ENCODE measurements at regions of chr20 and their contacts with region 1.

Region 1: DNA sequence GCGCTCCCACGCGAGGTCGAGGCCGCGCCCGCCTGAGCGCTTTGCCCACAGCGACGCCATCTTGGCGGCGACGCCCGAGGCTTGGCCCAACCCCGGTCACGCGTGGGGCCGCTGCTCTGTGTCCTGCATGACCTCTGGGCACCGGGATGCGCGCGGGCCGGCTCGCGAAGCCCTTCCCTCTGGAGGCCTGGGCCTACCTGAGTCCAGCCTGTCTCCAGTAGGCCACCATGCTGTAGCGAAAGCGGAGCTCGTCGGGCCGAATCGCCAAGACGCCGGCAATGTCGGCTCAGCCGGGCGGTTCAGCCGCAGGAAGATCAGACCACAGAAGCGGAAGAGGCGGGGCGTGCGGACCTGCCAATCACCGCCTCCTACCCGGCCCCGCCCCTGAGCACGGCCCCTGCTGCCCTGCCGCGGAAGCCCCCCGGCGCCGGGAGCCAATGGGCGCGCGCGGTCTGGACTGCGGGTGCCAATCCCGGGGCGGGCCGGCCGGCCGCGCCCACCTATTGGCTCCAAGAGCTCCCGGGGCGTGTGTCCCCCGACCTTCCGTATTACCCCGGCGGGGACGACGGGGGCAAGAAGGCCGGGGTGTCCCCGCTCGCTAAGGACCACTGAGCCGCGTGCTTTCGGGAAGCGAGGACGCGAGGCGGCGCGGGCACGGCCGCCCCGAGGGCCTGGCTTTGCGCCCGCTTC is at the start of gene ATP5F1E:
- DNase-seq: peak; percentile 95 to 97 (median 97)
- ATAC-seq: peak; percentile 97
- H3K4me3 ChIP-seq: peak within 1 kb of the TSS; percentile 84
- H3K27ac ChIP-seq: peak within 1 kb of the TSS; percentile 96
- H3K4me1 ChIP-seq: peaks cover 13 to 18% of the 10 kb centered on the region in 2 experiments; a peak in 4 of 5 replicates
- H3K27me3 ChIP-seq: no peaks in the 10 kb centered on the region
- CTCF ChIP-seq: no peak
- EP300 ChIP-seq: no peak
- POLR2A ChIP-seq: peak; percentile 96
- RAD21 ChIP-seq: peak in 1 of 2 experiments; percentile 13; a peak in 1 of 4 replicates
- polyA plus RNA-seq, gene ATP5F1E: 161 to 162 TPM

Region 2: GRCh38 chr20:58890518-58891085 is 141.6 kb before region 1 on chr20:
- CTCF ChIA-PET with region 1: no interaction called
- POLR2A ChIA-PET with region 1: no interaction called
- in situ Hi-C with region 1: no loop called
- intact Hi-C with region 1: loop called (anchors 5 kb)
- DNase-seq: peak in 1 of 4 experiments; percentile 67
- ATAC-seq: peak; percentile 42
- H3K4me3 ChIP-seq: peak overlapping the region; percentile 92
- H3K27ac ChIP-seq: peak overlapping the region; percentile 71
- H3K4me1 ChIP-seq: peaks cover 13 to 20% of the 10 kb centered on the region in 2 experiments; a peak in 4 of 5 replicates
- H3K27me3 ChIP-seq: no peaks in the 10 kb centered on the region
- CTCF ChIP-seq: no peak
- EP300 ChIP-seq: no peak
- POLR2A ChIP-seq: 0 out of 2 replicates have a peak, but pooled peaks have one; percentile 45
- RAD21 ChIP-seq: no peak

Region 3: DNA sequence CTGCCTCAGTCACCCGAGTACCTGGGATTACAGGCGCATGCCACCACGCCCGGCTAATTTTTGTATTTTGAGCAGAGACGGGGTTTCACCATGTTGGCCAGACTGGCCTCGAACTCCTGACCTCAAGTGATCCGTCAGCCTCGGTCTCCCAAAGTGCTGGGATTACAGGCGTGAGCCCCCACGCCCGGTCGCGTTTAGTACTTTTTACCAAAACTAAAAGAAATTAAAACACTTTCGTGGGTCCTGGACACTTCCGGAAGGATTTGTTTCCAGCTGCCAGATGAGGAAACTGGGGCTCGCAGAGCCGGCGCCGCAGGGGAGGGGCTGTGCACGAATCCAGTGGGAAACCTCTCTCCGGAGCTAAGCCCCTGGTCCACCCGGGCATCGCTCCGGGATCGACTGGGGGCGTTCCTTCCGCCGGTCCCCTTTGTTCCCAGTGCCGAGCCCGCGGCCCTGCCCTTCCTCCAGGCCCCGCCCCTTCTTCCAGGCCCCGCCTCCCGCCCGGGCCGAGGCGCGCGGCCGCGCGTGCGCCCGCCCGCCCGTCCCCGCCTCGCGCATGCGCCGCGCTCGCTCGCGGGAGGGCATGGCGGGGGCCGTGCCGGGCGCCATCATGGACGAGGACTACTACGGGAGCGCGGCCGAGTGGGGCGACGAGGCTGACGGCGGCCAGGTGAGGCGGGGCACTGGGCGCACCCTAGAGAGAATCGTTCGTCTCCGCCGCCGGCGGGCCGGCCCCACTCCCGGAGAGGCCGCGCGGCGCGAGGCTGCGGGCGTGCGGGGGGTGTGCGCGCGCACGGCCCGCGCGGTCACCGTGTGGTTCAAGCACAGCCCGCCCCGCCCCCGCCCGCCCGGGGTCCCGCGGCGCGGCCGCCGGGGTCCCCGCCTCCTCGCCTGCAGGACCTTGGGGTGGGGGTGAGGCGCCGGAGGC is 51.2 kb before region 1 on chr20 and contains the start of gene NELFCD:
- CTCF ChIA-PET with region 1: no interaction called
- POLR2A ChIA-PET with region 1: interaction called, 3 read pairs
- in situ Hi-C with region 1: no loop called
- intact Hi-C with region 1: loop called (anchors 5 kb)
- DNase-seq: peak; percentile 91 to 99 (median 99)
- ATAC-seq: peak; percentile 84
- H3K4me3 ChIP-seq: peak within 1 kb of the TSS; percentile 78
- H3K27ac ChIP-seq: peak within 1 kb of the TSS; percentile 84
- H3K4me1 ChIP-seq: peaks cover 17 to 25% of the 10 kb centered on the region in 2 experiments; a peak in 4 of 5 replicates
- H3K27me3 ChIP-seq: no peaks in the 10 kb centered on the region
- CTCF ChIP-seq: no peak
- EP300 ChIP-seq: no peak
- POLR2A ChIP-seq: peak; percentile 77
- RAD21 ChIP-seq: no peak
- polyA plus RNA-seq, gene NELFCD: 11.7 to 22.2 TPM

Region 4: DNA sequence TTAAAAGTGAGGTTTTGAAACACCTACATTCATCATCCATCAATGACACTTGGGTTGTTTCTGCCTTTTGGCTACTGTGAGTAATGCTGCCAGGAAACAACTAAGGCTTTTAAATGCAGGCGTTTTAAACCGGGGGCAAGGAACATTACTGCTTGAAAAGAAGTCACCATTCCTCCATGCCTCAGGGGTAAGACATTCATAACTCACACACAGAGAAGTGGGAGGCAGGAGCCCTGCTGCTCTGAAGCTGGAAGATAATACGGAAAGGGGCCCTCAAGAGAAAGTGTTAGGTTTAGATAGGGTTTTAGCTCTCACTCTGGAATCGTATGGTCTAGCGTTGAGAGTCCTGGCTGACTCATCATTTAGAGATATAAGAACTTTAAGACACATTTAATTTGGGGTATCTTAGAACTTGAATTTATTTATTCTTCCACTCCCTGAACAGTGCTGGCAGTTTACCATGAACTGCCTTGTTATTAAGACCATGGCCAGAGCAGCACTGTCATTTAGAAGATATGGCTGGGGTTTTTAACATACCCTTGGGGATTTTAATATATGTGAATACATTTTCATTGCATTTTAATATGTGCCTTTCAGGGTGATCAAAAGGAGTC is 11.1 kb before region 1 on chr20:
- CTCF ChIA-PET with region 1: no interaction called
- POLR2A ChIA-PET with region 1: interaction called, 31 read pairs
- in situ Hi-C with region 1: no loop called
- intact Hi-C with region 1: no loop called
- DNase-seq: peak; percentile 58 to 94 (median 72)
- ATAC-seq: peak; percentile 86
- H3K4me3 ChIP-seq: peak overlapping the region; percentile 32; the same call in 1 of the 2 replicates
- H3K27ac ChIP-seq: peak overlapping the region; percentile 96
- H3K4me1 ChIP-seq: peaks cover 48 to 55% of the 10 kb centered on the region in 2 experiments
- H3K27me3 ChIP-seq: no peaks in the 10 kb centered on the region
- CTCF ChIP-seq: no peak
- EP300 ChIP-seq: peak; percentile 96
- POLR2A ChIP-seq: peak; percentile 65
- RAD21 ChIP-seq: no peak

Region 5: GRCh38 chr20:59042796-59043660 is 10.9 kb after region 1 on chr20:
- CTCF ChIA-PET with region 1: no interaction called
- POLR2A ChIA-PET with region 1: interaction called, 28 read pairs
- in situ Hi-C with region 1: no loop called
- intact Hi-C with region 1: no loop called
- DNase-seq: peak; percentile 97 to 98 (median 98)
- ATAC-seq: peak; percentile 96
- H3K4me3 ChIP-seq: peak overlapping the region; percentile 69
- H3K27ac ChIP-seq: peak overlapping the region; percentile 83
- H3K4me1 ChIP-seq: peaks cover 12 to 22% of the 10 kb centered on the region in 2 experiments; a peak in 4 of 5 replicates
- H3K27me3 ChIP-seq: no peaks in the 10 kb centered on the region
- CTCF ChIP-seq: peak in 1 of 3 experiments; percentile 10; a peak in 1 of 6 replicates
- EP300 ChIP-seq: no peak
- POLR2A ChIP-seq: peak; percentile 49
- RAD21 ChIP-seq: no peak

Region 6: GRCh38 chr20:59095140-59095539 is 63.0 kb after region 1 on chr20:
- CTCF ChIA-PET with region 1: no interaction called
- POLR2A ChIA-PET with region 1: no interaction called
- in situ Hi-C with region 1: no loop called
- intact Hi-C with region 1: no loop called
- DNase-seq: no peak
- ATAC-seq: no peak
- H3K4me3 ChIP-seq: no peak overlapping the region
- H3K27ac ChIP-seq: no peak overlapping the region
- H3K4me1 ChIP-seq: no peaks in the 10 kb centered on the region
- H3K27me3 ChIP-seq: peaks cover 13 to 16% of the 10 kb centered on the region in 2 experiments
- CTCF ChIP-seq: no peak
- EP300 ChIP-seq: no peak
- POLR2A ChIP-seq: no peak
- RAD21 ChIP-seq: no peak

Measured in K562 (cell line).